ENCODE measurements at regions of chr12 and their contacts with region 1.

Region 1: DNA sequence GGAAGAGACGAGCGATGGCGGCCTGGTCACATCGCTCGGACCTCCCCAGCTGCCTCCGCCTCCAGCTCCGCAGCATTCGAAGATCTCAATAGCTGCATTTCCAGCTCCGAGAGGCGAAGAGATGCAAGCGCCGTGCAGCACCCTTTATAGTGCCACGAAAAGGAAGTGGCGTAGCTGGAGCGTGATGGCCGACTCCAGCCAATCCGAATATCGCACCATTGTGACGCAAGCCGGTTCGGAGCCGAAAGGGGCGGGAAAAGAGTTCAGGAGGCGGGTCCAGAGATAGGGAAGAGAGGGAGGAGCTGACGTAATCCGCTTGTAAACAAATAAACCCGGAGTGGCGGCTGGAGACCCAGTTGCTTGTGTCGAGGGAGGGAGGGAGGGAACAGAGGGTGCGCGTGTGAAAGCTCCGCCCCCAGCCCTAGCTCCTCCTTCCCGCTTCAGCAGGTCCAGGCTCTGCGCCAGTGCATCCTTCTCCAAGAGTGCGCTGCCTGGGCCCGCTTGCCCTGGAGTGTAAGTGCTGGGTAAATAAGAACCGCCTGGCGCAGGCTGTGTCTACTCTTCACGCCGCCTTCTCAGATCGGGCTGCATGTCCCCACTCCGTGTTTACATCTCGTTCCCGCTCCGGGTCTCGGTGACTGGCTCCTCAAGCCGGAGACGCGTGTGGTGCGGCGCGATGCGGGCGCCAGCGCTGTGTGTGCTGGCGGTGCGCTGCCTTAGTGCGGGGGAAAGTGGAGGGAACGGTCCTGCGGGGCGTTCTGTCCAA is at the start of gene BTG1:
- DNase-seq: peak; percentile 98 to 99
- ATAC-seq: peak; percentile 94
- H3K4me3 ChIP-seq: peak within 1 kb of the TSS; percentile 98
- H3K27ac ChIP-seq: peak within 1 kb of the TSS; percentile 91 to 99
- H3K4me1 ChIP-seq: no peaks in the 10 kb centered on the region
- H3K27me3 ChIP-seq: no peaks in the 10 kb centered on the region
- total RNA-seq, gene BTG1: 81.0 to 86.9 TPM

Region 2: GRCh38 chr12:91577586-91578539 is 568.1 kb before region 1 on chr12:
- intact Hi-C with region 1: loop called in 1 of 2 experiments (anchors 10 kb)
- DNase-seq: no peak
- ATAC-seq: no peak
- H3K4me3 ChIP-seq: no peak overlapping the region
- H3K27ac ChIP-seq: no peak overlapping the region
- H3K4me1 ChIP-seq: no peaks in the 10 kb centered on the region
- H3K27me3 ChIP-seq: no peaks in the 10 kb centered on the region

Region 3: DNA sequence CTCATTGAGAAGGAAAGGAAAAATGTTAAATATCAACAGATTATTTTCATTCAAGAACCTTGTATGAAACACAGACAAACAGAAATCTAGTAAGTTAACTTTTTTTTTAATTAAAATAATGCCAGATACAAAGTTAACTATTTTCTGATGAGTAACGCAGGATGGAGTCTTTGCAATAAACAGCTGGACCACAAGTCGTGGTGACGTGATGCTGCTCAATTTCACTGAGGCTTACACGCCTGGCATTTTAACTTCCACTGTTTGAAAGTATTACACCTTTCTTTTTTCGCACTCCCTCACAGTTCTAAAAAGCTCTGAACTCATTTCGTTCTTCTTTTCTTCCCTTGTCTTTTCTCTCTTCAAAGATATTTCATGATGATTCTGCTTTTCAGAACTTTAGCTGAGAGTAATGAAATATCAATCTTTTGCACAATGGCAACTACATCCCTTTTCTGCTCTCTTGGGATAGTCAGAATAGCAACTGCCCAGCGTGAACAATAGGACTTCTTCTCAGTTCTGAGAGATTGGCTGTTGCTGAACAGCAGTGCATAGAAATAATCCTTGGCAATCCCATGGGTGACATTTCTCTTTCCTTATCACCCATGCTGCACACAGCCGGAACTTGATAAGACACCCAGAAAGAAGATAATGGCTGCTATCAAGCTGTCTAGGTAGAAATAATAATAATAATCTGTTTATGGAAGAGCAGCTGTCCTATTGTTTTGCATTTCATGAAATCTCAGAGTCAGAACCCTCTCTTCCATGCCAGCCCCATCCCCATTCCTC is 160.7 kb before region 1 on chr12:
- intact Hi-C with region 1: loop called (anchors 1 to 5 kb)
- DNase-seq: no peak
- ATAC-seq: no peak
- H3K4me3 ChIP-seq: no peak overlapping the region
- H3K27ac ChIP-seq: peak overlapping the region in 1 of 2 donors; percentile 45
- H3K4me1 ChIP-seq: peaks cover 8 to 23% of the 10 kb centered on the region in 2 donors
- H3K27me3 ChIP-seq: no peaks in the 10 kb centered on the region

Region 4: DNA sequence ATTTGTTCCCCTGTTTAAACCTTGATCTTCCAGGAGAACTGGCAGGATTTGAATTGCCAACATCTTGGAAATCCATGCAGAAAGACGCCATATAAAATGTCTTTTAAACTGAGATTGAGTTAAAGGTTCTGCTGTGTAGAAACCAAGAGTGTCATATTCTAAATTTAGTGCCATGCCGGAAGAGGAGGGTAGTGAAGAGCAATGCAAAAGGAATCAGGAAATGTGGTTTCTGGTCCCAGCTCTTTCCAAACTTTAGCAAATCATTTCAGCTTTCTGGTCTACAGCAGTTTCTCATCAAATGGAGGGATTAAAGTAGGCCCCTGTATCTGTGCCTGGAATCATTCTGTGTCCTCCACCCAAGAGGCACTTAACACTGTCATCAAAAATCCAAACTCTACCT is 85.9 kb before region 1 on chr12:
- intact Hi-C with region 1: loop called in 1 of 2 experiments (anchors 5 kb)
- DNase-seq: no peak
- ATAC-seq: no peak
- H3K4me3 ChIP-seq: no peak overlapping the region
- H3K27ac ChIP-seq: peak overlapping the region; percentile 73 to 76
- H3K4me1 ChIP-seq: peaks cover 5% of the 10 kb centered on the region in 2 donors
- H3K27me3 ChIP-seq: no peaks in the 10 kb centered on the region

Region 5: DNA sequence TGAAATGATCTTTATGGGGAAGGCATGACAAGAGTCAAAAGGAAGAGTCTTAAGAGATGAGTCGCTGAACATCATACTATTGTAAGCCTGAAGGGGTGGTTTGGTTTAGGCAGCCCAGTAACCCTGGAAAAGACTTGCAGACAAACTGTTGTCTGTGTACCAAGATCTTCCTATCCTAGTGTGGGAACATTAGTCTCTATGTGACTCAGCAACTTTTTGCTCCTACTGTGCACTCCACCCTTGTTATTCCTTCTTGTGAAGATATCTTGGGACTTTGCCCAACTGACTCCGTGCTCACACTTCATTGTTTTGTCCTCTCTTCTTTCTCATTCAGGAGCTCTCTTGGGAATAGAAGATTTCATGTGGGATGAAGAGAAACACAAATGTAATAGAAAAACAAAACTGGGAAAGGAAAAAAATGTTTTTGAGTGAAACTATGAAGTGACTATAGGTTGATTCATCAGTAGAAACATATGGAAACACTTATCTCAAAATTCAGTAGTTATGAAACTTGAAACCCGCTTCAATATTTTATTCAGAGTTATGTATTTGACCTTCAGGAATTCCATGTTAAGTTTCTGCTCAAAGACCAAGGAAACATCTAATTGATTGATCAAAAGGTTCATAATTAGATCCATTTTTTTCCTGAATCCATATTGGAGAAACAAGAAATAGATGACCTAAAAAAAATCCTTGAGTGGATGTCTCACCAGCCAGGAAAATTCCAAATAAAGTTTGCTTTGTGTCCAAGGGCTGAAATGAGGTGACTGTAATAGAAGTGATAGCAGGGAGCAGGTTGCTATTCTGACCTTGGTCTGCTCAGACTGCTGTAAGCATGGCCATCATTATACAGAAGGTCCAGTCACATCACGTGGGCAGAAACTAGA is 67.5 kb before region 1 on chr12:
- intact Hi-C with region 1: no loop called
- DNase-seq: no peak
- ATAC-seq: peak; percentile 73
- H3K4me3 ChIP-seq: no peak overlapping the region
- H3K27ac ChIP-seq: no peak overlapping the region
- H3K4me1 ChIP-seq: peaks cover 0 to 7% of the 10 kb centered on the region in 2 donors
- H3K27me3 ChIP-seq: no peaks in the 10 kb centered on the region

Region 6: GRCh38 chr12:92505254-92506231 is 359.6 kb after region 1 on chr12:
- intact Hi-C with region 1: loop called in 1 of 2 experiments (anchors 10 kb)
- DNase-seq: peak; percentile 76 to 79
- ATAC-seq: peak; percentile 70
- H3K4me3 ChIP-seq: no peak overlapping the region
- H3K27ac ChIP-seq: peak overlapping the region; percentile 2 to 7
- H3K4me1 ChIP-seq: peaks cover 0 to 2% of the 10 kb centered on the region in 2 donors
- H3K27me3 ChIP-seq: no peaks in the 10 kb centered on the region